Activated CD4-positive, alpha-beta T cell treated with anti-CD3 and anti-CD28 coated beads for 36 hours (primary cell): ENCODE measurements at regions of chr7 and their contacts with region 1.

Region 1: GRCh38 chr7:149883452-149883861 is 9.7 kb downstream of the ATP6V0E2 start:
- DNase-seq: peak; percentile 81
- ATAC-seq: peak; percentile 93
- H3K4me3 Mint-ChIP-seq: no peak overlapping the region
- H3K27ac Mint-ChIP-seq: no peak overlapping the region
- H3K4me1 Mint-ChIP-seq: peaks cover 4% of the 10 kb centered on the region
- H3K27me3 Mint-ChIP-seq: no peaks in the 10 kb centered on the region

Region 2: GRCh38 chr7:150003304-150003810 is 119.9 kb after region 1 on chr7:
- CTCF ChIA-PET with region 1: no interaction called
- POLR2A ChIA-PET with region 1: no interaction called
- intact Hi-C with region 1: loop called in 1 of 2 experiments (anchors 1 kb)
- DNase-seq: no peak
- ATAC-seq: no peak
- H3K4me3 Mint-ChIP-seq: no peak overlapping the region
- H3K27ac Mint-ChIP-seq: no peak overlapping the region
- H3K4me1 Mint-ChIP-seq: no peaks in the 10 kb centered on the region
- H3K27me3 Mint-ChIP-seq: no peaks in the 10 kb centered on the region